ENCODE measurements at regions of chr1 and their contacts with region 1.

Region 1: GRCh38 chr1:197869490-197870077 is 32.8 kb upstream of the C1orf53 start:
- DNase-seq: no peak
- H3K4me3 ChIP-seq: no peak overlapping the region
- H3K27ac ChIP-seq: no peak overlapping the region
- H3K4me1 ChIP-seq: no peaks in the 10 kb centered on the region
- H3K27me3 ChIP-seq: no peaks in the 10 kb centered on the region
- CTCF ChIP-seq: no peak
- POLR2A ChIP-seq: no peak

Region 2: DNA sequence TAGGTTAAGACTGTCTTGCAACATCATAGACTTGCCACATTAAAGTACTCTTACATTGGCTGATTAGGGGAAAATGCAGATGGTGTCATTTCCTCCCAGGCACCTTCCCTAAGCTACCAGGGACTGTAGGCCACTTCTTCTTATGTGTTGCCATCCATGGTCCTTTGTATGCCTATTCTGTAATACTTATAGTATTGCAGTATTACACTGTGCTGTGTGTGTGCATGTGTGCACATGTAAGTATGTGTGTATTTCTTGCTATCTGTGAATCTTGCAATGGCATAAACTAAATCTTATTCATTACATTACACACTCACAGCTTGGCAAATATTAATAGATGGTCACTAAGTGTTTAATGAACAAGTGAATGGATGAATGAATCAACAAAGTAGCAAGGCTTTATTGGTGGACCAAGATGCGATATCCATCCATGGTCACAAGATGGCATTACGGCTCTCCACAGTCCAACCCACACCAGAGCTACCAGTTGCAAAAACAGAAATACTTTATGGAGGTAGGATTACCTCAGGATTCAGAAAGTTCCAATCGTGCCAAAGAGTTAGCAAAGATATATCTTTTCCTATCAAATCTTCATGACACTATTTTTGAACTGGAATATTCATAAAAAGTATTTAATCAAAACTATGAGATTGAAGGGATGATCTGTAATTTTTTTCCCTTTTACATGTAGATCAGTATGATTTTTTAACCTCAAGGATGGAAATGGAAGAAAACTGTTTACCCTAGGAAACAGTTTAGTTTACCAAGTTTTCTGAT is 254.5 kb before region 1 on chr1:
- intact Hi-C with region 1: loop called (anchors 10 kb)
- DNase-seq: no peak
- H3K4me3 ChIP-seq: no peak overlapping the region
- H3K27ac ChIP-seq: no peak overlapping the region
- H3K4me1 ChIP-seq: no peaks in the 10 kb centered on the region
- H3K27me3 ChIP-seq: no peaks in the 10 kb centered on the region
- CTCF ChIP-seq: peak in 3 of 6 experiments; percentile 32 to 61 (median 40)
- POLR2A ChIP-seq: no peak